ENCODE measurements at regions of chr4 and their contacts with region 1.

Region 1: DNA sequence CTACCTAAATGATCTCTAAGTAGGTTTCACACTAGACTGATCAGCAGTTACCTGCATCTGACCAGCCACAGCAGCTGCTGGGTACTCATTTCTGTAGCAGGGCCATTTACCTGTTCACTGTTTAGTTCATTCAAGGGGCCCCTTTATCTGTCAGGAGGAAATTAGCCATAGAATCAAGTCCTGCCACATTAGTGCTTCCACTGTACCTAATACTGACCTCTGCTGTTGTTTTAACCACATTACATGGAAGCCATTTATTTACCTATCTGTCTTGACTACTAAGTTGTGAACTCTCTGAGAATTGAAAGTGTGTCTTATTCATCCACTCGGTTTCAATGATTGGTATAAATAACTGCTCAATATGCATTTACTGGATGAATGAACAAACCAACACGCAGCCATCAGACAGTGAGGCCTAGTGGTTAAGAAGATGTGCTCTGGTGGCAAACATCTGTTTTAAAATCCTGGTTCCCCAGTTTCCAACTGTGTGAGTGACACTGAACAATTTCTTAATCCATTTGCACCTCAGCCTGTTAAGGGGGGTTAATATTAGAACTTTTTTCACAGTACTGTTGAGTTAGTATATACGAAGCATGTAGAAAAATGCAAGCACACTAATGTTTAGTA is 30.0 kb upstream of the ANXA5 start:
- DNase-seq: peak; percentile 64
- CTCF ChIP-seq: peak; percentile 70

Region 2: GRCh38 chr4:121711263-121712000 is 15.3 kb before region 1 on chr4:
- CTCF ChIA-PET with region 1: interaction called, 15 read pairs
- POLR2A ChIA-PET with region 1: no interaction called
- DNase-seq: peak; percentile 63
- CTCF ChIP-seq: no peak

Region 3: GRCh38 chr4:121736735-121737351 is 10.1 kb after region 1 on chr4:
- CTCF ChIA-PET with region 1: interaction called, 21 read pairs
- POLR2A ChIA-PET with region 1: no interaction called
- DNase-seq: peak; percentile 26
- CTCF ChIP-seq: peak; percentile 9

Region 4: DNA sequence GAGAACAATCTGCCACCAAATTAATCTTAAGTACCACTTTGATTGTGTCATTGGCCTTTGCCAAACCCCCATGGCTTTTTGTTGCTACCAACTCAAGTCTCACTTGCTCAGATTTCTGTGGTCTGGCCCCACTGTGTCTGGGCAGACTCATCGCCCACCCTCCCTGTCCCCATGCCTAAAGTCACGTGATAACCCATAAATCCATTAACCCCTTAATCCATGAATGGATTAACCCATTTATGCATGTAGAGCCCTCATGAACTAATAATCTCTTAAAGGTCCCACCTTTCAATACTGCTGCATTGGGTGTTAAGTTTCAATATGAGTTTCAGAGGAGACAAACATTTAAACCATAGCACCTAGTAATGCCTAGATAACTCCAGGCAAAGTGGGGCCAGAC is 346.9 kb after region 1 on chr4:
- CTCF ChIA-PET with region 1: no interaction called
- POLR2A ChIA-PET with region 1: no interaction called
- DNase-seq: no peak
- CTCF ChIP-seq: no peak

Measured in GM10248 (cell line).